Naive thymus-derived CD8-positive, alpha-beta T cell (primary cell): ENCODE measurements at regions of chr5 and their contacts with region 1.

Region 1: GRCh38 chr5:76736679-76737556 is 21.0 kb downstream of the F2R start:
- DNase-seq: no peak
- ATAC-seq: no peak
- H3K4me3 Mint-ChIP-seq: peak overlapping the region in 3 of 10 donors; percentile 5 to 62 (median 22)
- H3K27ac Mint-ChIP-seq: peak overlapping the region in 6 of 10 donors; percentile 0 to 94 (median 41)
- H3K4me1 Mint-ChIP-seq: peaks cover 6 to 45% (median 17%) of the 10 kb centered on the region in 4 donors
- H3K27me3 Mint-ChIP-seq: peaks cover 0 to 4% (median 0%) of the 10 kb centered on the region in 5 donors

Region 2: DNA sequence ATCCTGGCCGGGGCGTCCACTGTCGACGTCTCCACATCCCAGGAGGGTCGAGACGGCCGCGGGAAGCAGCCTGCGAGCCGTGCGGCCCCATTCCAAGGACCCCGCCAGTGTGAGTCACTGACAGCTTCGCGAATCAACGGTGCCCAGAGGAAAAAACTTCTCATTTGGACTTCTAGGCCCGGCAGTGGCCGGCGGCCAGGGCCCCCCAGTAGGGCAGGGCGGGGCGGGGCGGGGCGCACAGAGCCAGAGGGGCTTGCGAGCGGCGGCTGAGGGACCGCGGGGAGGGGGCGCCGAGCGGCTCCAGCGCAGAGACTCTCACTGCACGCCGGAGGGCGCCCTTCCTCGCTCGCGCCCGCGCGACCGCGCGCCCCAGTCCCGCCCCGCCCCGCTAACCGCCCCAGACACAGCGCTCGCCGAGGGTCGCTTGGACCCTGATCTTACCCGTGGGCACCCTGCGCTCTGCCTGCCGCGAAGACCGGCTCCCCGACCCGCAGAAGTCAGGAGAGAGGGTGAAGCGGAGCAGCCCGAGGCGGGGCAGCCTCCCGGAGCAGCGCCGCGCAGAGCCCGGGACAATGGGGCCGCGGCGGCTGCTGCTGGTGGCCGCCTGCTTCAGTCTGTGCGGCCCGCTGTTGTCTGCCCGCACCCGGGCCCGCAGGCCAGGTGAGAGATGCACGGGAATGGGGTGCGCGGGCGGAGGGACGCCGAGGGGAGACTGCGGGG is 21.0 kb before region 1 on chr5 and contains the start of gene F2R:
- POLR2A ChIA-PET with region 1: interaction called, 11 read pairs
- DNase-seq: peak in 9 of 10 donors; percentile 6 to 68 (median 37)
- ATAC-seq: peak; percentile 79
- H3K4me3 Mint-ChIP-seq: peak within 1 kb of the TSS; percentile 64 to 87 (median 83)
- H3K27ac Mint-ChIP-seq: peak within 1 kb of the TSS in 6 of 10 donors; percentile 19 to 83 (median 32)
- H3K4me1 Mint-ChIP-seq: peaks cover 5 to 34% (median 31%) of the 10 kb centered on the region in 4 donors
- H3K27me3 Mint-ChIP-seq: peaks cover 21 to 54% (median 38%) of the 10 kb centered on the region in 5 donors
- polyA plus RNA-seq, gene F2R: 0.65 to 37.3 (median 1.2) TPM